HCT116 (cell line): ENCODE measurements at regions of chr18 and their contacts with region 1.

Region 1: GRCh38 chr18:27750014-27750413 is 426.9 kb downstream of the CDH2 start:
- DNase-seq: peak; percentile 19
- ATAC-seq: peak; percentile 70
- H3K4me3 ChIP-seq: no peak overlapping the region
- H3K27ac ChIP-seq: no peak overlapping the region
- H3K4me1 ChIP-seq: no peaks in the 10 kb centered on the region
- H3K27me3 ChIP-seq: no peaks in the 10 kb centered on the region
- CTCF ChIP-seq: peak; percentile 26 to 59 (median 56); a peak in 4 of 6 replicates
- POLR2A ChIP-seq: no peak
- RAD21 ChIP-seq: peak; percentile 54

Region 2: DNA sequence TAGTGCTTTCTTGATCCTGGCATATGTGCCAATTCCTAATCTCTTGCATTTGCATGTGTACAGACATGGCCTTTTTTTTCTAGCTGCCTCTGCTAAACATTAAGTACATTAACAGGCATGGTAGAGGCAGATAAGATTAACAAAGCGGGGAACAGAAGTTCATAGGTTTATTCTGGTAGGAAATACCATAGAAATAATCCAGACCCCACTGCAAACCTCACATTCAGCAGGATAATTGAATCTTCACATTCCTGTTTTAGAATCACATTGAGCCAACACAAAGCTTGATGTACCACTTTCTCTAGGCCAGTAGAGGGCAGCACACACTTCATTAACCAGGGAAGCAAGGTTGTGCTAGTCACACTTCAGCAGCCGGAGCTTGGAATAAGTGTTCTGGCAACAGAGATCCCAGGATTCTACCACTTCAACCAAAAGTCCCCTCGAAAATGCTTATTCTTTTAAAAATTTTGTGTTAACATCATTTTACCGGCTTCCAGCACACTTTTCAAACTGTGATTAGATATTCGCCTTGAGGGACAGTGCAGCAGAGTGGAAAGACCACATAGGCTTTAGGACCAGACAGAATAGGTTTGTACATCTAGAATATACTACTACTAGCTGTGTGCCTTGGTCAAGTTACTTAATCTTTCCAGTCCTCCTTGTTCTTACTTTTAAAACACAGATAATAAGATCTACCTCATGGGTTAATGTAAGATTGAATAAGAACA is 144.7 kb before region 1 on chr18:
- CTCF ChIA-PET with region 1: interaction called, 26 read pairs
- POLR2A ChIA-PET with region 1: interaction called, 3 read pairs
- RAD21 ChIA-PET with region 1: interaction called in 1 of 2 experiments, 3 read pairs
- intact Hi-C with region 1: no loop called
- DNase-seq: peak; percentile 28
- ATAC-seq: peak; percentile 77
- H3K4me3 ChIP-seq: no peak overlapping the region
- H3K27ac ChIP-seq: no peak overlapping the region
- H3K4me1 ChIP-seq: no peaks in the 10 kb centered on the region
- H3K27me3 ChIP-seq: no peaks in the 10 kb centered on the region
- CTCF ChIP-seq: peak in 2 of 3 experiments; percentile 68 to 78; a peak in 4 of 6 replicates
- POLR2A ChIP-seq: no peak
- RAD21 ChIP-seq: peak; percentile 55

Region 3: DNA sequence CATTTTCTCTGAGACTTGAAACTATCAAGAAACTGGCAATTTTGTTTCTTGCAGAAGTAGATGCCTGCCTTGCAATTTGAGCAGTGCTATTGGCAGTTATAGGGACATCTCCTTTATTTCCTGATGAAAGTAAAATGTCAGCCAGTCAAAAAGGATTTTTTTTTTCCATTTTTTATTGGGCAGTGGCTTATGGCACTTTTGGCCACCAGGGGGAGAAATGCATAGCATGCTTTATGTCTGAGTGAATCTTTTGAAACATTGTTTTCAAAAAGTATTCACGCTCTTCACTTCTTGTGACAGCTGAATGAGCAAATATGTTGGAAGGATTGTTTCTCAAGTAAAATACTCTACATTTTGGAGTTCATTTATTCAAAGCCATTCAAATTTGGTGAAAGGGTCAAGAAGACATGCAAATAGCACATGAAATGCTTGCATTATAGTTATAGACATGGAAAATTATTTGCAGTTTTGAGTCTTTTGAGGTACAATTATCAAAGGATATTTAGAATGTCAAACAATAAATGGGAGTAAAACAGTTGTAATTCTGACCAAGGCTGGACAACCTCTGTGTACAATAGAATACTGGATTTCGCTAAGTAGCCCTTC is 64.1 kb before region 1 on chr18:
- CTCF ChIA-PET with region 1: interaction called, 10 read pairs
- POLR2A ChIA-PET with region 1: no interaction called
- RAD21 ChIA-PET with region 1: no interaction called
- intact Hi-C with region 1: no loop called
- DNase-seq: peak; percentile 18
- ATAC-seq: no peak; the same call in 1 of the 2 replicates
- H3K4me3 ChIP-seq: no peak overlapping the region
- H3K27ac ChIP-seq: no peak overlapping the region
- H3K4me1 ChIP-seq: no peaks in the 10 kb centered on the region
- H3K27me3 ChIP-seq: no peaks in the 10 kb centered on the region
- CTCF ChIP-seq: peak; percentile 14 to 70 (median 62); a peak in 5 of 6 replicates
- POLR2A ChIP-seq: no peak
- RAD21 ChIP-seq: no peak

Region 4: DNA sequence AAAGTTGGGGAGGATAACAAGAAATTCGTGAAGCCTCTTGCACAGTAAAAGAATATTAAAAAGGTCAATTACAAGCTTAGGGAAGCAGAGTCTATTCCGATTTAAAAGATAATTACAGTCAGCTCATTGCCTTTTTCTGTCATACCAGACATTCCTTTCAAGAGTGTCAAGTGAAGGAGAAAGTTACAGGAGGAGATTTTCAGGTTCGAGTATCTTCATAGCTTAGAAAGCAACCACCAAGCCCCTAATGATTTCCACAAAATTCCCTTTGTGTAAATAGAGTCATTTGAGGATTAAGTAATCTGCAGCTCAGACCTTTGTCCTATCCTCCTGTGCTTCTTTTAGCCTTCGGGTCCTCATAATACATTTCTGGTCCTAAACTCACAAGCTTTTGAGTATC is 12.0 kb after region 1 on chr18:
- CTCF ChIA-PET with region 1: interaction called, 11 read pairs
- POLR2A ChIA-PET with region 1: no interaction called
- RAD21 ChIA-PET with region 1: no interaction called
- intact Hi-C with region 1: no loop called
- DNase-seq: no peak
- ATAC-seq: no peak
- H3K4me3 ChIP-seq: no peak overlapping the region
- H3K27ac ChIP-seq: no peak overlapping the region
- H3K4me1 ChIP-seq: no peaks in the 10 kb centered on the region
- H3K27me3 ChIP-seq: no peaks in the 10 kb centered on the region
- CTCF ChIP-seq: no peak
- POLR2A ChIP-seq: no peak
- RAD21 ChIP-seq: no peak

Region 5: DNA sequence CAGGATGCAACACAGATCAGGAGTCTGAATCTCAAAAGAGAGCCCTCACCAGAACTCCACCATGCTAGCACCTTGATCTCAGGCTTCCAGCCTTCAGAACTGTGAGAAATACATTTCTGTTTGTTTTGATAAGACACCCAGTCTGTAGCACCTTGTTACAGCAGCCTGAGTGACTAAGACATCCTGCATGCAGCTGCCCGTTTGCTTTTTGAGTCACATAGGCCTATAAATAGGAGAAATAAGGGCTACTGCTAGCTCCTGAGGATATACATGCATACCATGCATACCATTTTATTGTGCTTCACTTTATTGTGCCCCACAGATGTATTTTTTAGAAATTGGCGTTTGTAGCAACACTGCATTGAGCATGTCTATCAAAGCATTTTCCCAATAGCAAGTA is 89.1 kb after region 1 on chr18:
- CTCF ChIA-PET with region 1: no interaction called
- POLR2A ChIA-PET with region 1: no interaction called
- RAD21 ChIA-PET with region 1: no interaction called
- intact Hi-C with region 1: no loop called
- DNase-seq: no peak
- ATAC-seq: peak; percentile 85
- H3K4me3 ChIP-seq: no peak overlapping the region
- H3K27ac ChIP-seq: no peak overlapping the region
- H3K4me1 ChIP-seq: peaks cover 9 to 32% of the 10 kb centered on the region in 2 experiments; a peak in 3 of 4 replicates
- H3K27me3 ChIP-seq: no peaks in the 10 kb centered on the region
- CTCF ChIP-seq: no peak
- POLR2A ChIP-seq: no peak
- RAD21 ChIP-seq: no peak

Region 6: GRCh38 chr18:27871726-27872125 is 121.7 kb after region 1 on chr18:
- CTCF ChIA-PET with region 1: no interaction called
- POLR2A ChIA-PET with region 1: no interaction called
- RAD21 ChIA-PET with region 1: no interaction called
- intact Hi-C with region 1: no loop called
- DNase-seq: no peak
- ATAC-seq: no peak
- H3K4me3 ChIP-seq: no peak overlapping the region
- H3K27ac ChIP-seq: no peak overlapping the region
- H3K4me1 ChIP-seq: no peaks in the 10 kb centered on the region
- H3K27me3 ChIP-seq: no peaks in the 10 kb centered on the region
- CTCF ChIP-seq: no peak
- POLR2A ChIP-seq: no peak
- RAD21 ChIP-seq: no peak